ENCODE measurements at regions of chr13 and their contacts with region 1.

Region 1: DNA sequence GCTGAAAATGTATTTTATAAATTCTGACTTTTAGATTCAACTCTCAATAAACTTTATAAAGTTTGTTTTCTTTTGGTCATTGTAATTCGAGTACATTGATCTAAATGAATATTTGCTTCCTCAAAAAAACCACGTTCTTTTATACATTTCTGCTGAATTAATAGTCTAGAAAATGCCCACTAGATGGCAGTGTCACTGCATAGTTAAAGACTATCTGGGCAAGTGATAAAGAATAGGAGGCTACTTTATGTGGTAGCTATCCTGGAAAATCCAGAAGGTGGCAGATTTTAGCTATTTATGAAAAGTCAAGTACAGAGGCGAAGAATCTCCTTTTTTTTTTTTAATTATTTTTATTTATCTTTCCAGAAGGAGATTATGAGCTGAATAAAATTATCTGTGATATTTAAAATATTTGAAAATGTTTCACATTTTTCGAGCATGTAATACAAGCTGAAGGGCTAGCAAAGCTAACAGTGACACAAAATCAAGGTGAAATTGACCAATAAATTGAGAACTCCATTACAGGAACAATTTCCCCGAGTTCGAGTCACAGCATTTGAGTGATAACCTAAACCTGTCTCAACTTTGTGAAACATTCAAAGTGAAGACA is 221.8 kb downstream of the OLFM4 start:
- DNase-seq: peak; percentile 56
- H3K4me3 ChIP-seq: no peak overlapping the region
- H3K27ac ChIP-seq: no peak overlapping the region
- H3K4me1 ChIP-seq: no peaks in the 10 kb centered on the region
- H3K27me3 ChIP-seq: no peaks in the 10 kb centered on the region
- CTCF ChIP-seq: peak; percentile 70 to 81

Region 2: DNA sequence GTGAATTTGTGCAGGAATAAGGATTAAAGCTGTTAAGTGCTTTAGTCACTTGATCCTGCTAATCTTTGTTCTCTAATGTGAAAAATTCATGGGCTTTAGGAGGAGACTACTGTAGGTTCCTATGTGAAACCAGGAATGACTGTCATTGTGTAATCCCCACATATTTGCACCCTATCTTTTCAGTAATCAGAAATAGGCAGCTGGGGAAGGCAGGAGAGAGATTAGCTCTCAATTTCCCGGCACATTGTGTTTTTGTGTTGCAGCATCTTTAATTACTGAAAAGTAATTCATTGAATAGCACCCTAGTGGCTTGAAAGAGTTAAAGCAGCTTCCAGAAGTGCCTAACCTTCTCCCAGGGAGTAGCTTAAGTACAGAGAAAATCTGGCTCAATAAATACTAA is 61.2 kb after region 1 on chr13:
- CTCF ChIA-PET with region 1: no interaction called
- dilution Hi-C with region 1: no loop called
- in situ Hi-C with region 1: no loop called
- intact Hi-C with region 1: no loop called
- DNase-seq: no peak
- H3K4me3 ChIP-seq: no peak overlapping the region
- H3K27ac ChIP-seq: no peak overlapping the region
- H3K4me1 ChIP-seq: no peaks in the 10 kb centered on the region
- H3K27me3 ChIP-seq: no peaks in the 10 kb centered on the region
- CTCF ChIP-seq: no peak

Region 3: GRCh38 chr13:53782488-53782961 is 532.2 kb after region 1 on chr13:
- CTCF ChIA-PET with region 1: interaction called, 8 read pairs
- dilution Hi-C with region 1: no loop called
- in situ Hi-C with region 1: no loop called
- intact Hi-C with region 1: loop called (anchors 5 kb)
- DNase-seq: peak; percentile 20
- H3K4me3 ChIP-seq: no peak overlapping the region
- H3K27ac ChIP-seq: no peak overlapping the region
- H3K4me1 ChIP-seq: no peaks in the 10 kb centered on the region
- H3K27me3 ChIP-seq: no peaks in the 10 kb centered on the region
- CTCF ChIP-seq: peak; percentile 76 to 79